BJ (cell line): ENCODE measurements at regions of chr20 and their contacts with region 1.

Region 1: DNA sequence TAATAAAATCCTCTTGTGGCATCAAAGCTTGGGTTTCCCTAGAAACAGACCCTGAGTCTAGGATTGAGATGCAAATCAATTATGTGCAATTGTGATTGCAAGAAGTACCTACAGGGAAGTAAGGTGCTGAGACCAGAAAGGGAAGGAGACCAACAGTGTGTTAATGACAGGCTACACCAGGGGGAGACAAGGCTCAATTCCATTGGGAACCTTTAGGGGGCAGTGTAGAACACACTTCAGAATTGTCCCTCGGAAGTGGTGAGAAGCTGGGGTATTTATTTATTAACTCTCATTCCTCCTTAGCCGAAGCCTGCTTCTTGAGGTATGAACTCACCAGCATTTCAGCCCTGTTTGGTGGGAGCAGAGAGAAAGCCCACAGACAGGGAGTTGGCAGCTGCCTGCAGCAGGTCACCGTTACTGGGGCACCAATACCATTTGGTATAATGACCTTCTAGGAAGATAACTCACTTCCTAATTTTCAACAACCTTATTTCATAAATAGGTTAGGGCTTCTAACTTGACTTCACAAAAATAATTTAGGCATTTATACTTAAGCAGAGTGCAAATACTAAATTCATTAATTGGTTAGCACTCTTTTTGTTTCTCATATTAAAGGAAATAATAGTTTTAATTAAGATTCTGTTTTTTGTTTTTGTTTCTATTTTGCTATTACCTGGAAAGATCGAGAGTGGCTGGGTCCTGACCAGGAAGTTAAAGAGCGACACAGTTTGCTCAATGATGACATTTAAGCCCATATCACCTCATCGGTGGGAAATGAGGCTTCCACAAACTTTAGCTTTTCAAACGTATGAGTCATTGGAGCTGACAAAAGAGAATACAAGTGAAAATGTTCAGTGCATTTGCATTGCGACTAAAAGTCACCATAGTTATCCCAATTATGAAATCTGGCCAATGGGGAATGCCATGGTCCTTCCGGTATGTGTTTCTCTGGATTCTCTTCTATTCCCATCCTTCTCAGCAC is 94.8 kb downstream of the BTBD3 start:
- DNase-seq: no peak
- H3K4me3 ChIP-seq: no peak overlapping the region
- H3K27me3 ChIP-seq: no peaks in the 10 kb centered on the region
- CTCF ChIP-seq: peak; percentile 84

Region 2: DNA sequence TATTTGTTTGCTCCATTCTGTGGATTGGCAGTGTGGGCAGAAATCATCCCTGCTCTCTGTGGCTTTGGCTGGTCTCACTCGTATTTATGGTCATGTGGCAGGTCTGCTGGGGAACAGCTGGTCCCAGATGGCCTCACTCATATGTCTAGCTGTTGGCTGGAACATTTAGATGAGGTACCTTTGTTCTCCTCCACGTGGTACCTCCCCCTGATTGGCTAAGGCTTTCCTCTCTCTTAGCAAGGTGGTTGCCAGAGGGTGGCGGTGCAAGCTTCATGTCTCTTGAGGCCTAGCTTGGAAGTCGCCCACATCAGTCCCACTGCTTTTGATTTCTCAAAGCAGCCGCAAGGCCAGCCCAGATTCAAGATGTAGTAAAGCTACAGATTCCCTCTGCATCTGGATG is 443.4 kb before region 1 on chr20:
- CTCF ChIA-PET with region 1: no interaction called
- POLR2A ChIA-PET with region 1: no interaction called
- DNase-seq: no peak
- H3K4me3 ChIP-seq: no peak overlapping the region
- H3K27me3 ChIP-seq: no peaks in the 10 kb centered on the region
- CTCF ChIP-seq: no peak

Region 3: GRCh38 chr20:12207875-12208274 is 195.3 kb after region 1 on chr20:
- CTCF ChIA-PET with region 1: interaction called, 17 read pairs
- POLR2A ChIA-PET with region 1: no interaction called
- DNase-seq: no peak
- H3K4me3 ChIP-seq: no peak overlapping the region
- H3K27me3 ChIP-seq: no peaks in the 10 kb centered on the region
- CTCF ChIP-seq: peak; percentile 59